ENCODE measurements at regions of chr1 and their contacts with region 1.

Region 1: DNA sequence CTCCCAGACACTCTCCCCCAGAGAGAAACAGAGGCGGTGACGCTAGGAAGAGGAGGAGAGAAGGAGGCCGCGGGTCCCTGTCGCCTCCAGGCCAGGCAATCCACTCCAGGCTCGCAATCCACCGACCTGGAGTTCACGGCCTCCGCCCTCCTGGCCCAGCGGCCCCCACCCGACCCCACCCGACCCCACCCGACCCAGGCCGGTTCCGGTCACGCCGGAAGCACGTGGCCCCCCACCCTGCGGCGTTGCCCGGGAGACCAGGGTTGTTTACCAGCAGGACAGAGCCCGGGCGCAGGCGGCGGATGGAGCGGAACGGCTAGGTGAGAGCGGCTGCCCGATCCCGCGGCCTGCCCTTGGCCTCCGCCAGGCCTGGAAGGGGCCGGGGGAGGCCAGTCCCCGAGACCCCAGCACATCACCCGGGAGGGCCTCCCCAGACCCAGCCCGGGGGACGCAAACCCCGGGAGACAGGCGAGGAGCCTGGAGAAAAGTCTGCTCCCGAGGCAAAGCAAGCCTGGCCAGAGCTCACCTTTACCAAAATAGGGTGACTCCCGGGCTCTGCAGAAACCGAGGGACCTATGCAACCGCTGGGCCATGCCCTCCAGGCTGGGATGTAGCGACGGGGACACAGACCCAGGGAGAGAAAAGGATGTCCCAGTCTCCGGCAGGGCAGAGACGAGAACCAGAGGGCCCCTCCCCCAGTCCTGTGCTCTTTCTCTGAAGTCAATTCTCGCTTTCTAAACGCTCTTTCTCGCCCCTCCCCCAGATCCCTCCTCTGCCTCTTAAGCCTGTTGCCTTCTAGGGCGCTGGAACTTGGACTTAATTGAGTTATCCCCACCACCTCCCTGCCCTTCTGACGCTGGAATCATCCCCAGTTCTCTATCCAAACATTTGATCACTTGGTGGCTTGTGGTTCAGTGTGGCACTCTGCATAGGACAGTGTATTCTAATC is at the starts of genes PLA2G2C and UBXN10:
- DNase-seq: peak; percentile 88
- H3K4me3 Mint-ChIP-seq: peak within 1 kb of the TSS; percentile 77
- H3K27ac Mint-ChIP-seq: peak within 1 kb of the TSS; percentile 74
- H3K4me1 Mint-ChIP-seq: peaks cover 41% of the 10 kb centered on the region
- H3K27me3 Mint-ChIP-seq: peaks cover 21% of the 10 kb centered on the region
- total RNA-seq, gene PLA2G2C: 0.43 to 0.44 TPM
- total RNA-seq, gene UBXN10: 0.53 to 0.55 TPM

Region 2: DNA sequence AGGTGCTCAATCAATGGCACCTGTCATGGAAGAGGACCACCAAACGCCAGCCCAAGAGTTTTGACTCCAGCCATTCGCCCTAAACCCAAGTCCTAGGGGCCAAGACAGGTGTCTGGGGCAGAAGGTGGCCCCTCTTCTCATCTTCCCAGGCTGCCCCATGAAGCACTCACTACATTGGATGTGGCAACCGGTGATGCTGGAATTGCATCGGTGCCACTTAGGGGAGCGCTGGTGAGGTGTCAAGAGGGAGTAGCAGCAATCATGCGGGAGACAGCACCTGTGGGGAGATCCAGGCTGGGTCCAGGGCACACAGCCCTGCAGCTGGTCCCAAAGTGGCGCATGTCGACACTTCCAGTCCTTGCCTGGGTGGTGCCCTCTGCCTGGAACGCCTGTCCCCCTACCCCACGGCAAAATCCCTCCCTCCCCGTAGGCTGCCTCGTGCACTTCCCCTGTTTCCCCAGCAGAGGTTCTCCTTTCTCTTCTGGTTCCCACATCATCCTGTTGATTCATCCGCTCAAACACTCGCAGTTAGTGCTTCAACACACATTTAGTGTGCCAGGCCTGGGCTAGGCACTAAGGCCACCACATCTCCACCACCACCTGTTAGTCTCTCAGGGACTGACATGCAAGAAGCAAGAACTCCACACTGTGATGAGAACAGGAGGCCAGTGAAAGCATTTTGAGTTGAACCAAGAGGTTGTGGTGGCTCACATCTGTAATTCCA is 85.3 kb before region 1 on chr1:
- CTCF ChIA-PET with region 1: no interaction called
- POLR2A ChIA-PET with region 1: no interaction called
- intact Hi-C with region 1: loop called (anchors 5 kb)
- DNase-seq: peak; percentile 51
- H3K4me3 Mint-ChIP-seq: no peak overlapping the region
- H3K27ac Mint-ChIP-seq: no peak overlapping the region
- H3K4me1 Mint-ChIP-seq: peaks cover 2% of the 10 kb centered on the region
- H3K27me3 Mint-ChIP-seq: peaks cover 3% of the 10 kb centered on the region

Region 3: GRCh38 chr1:20174937-20175666 is 11.0 kb before region 1 on chr1:
- CTCF ChIA-PET with region 1: interaction called, 5 read pairs
- POLR2A ChIA-PET with region 1: interaction called, 4 read pairs
- intact Hi-C with region 1: loop called (anchors 1 kb)
- DNase-seq: no peak
- H3K4me3 Mint-ChIP-seq: no peak overlapping the region
- H3K27ac Mint-ChIP-seq: no peak overlapping the region
- H3K4me1 Mint-ChIP-seq: peaks cover 16% of the 10 kb centered on the region
- H3K27me3 Mint-ChIP-seq: no peaks in the 10 kb centered on the region

Region 4: GRCh38 chr1:20248971-20249612 is 63.0 kb after region 1 on chr1:
- CTCF ChIA-PET with region 1: no interaction called
- POLR2A ChIA-PET with region 1: no interaction called
- intact Hi-C with region 1: loop called (anchors 2 kb)
- DNase-seq: peak; percentile 67
- H3K4me3 Mint-ChIP-seq: no peak overlapping the region
- H3K27ac Mint-ChIP-seq: peak overlapping the region; percentile 85
- H3K4me1 Mint-ChIP-seq: peaks cover 23% of the 10 kb centered on the region
- H3K27me3 Mint-ChIP-seq: no peaks in the 10 kb centered on the region

Measured in activated CD4-positive, alpha-beta memory T cell treated with anti-CD3 and anti-CD28 coated beads for 36 hours (primary cell).